Activated naive CD4-positive, alpha-beta T cell treated with anti-CD3 and anti-CD28 coated beads, Interleukin-2, amount 10 ng/mL, durations not matched to agents 7 days and 5 days (primary cell): ENCODE measurements at regions of chr3 and their contacts with region 1.

Region 1: GRCh38 chr3:32018757-32019564 is 37.4 kb downstream of the ZNF860 start:
- DNase-seq: no peak
- H3K4me3 Mint-ChIP-seq: no peak overlapping the region
- H3K27ac Mint-ChIP-seq: no peak overlapping the region
- H3K4me1 Mint-ChIP-seq: no peaks in the 10 kb centered on the region
- H3K27me3 Mint-ChIP-seq: peaks cover 10% of the 10 kb centered on the region

Region 2: DNA sequence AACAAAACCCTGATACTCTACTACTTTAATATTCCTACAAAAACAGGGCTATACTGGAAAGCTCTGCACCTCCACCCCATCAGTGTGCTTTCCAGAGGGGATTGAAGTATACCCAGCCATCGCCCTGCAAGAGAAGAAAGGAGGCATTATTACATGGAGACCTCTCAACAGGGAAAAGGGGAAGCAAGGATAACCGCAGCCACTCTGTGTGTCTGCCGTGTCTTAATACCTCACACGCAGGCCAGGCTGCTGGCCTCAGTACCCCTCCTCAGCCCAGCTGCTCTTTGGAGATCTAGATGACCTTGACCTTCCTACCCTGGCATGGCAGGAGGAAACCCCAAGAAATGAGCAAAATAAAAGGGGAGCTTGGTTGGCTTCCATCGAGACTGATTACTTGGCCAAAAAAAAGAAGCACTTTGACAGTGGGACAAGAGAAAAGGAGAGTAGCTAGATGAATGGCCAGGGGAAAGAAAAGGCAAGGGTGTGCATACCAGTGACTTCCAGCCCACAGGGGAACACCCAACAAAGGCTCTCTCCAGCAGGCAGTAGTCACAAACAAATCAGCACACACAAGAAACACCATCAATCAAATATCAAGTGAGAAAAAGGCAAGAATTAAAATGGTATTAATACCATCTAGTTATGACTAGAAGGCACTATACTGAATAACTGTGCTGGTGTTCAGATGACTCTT is 356.8 kb before region 1 on chr3:
- CTCF ChIA-PET with region 1: no interaction called
- DNase-seq: no peak
- H3K4me3 Mint-ChIP-seq: no peak overlapping the region
- H3K27ac Mint-ChIP-seq: no peak overlapping the region
- H3K4me1 Mint-ChIP-seq: no peaks in the 10 kb centered on the region
- H3K27me3 Mint-ChIP-seq: no peaks in the 10 kb centered on the region

Region 3: DNA sequence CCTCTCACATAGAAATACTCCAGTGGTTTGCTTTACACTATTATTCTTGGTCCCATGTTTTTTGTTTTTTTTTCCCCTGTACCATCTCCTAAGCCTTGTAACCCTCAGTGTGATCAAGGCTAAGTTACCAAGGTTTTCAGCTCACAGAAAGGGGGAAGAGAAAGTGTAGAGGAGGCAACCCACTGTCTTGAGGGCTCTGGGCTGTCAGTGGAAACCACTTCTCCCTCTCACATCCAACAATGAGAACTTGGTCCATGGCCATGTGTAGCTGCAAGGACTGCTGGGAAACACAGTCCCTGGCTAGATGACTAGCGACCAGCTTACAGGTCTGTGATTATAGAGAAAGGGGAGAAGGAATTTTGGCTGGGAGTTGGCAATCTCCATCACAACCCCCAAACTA is 117.7 kb after region 1 on chr3:
- CTCF ChIA-PET with region 1: interaction called, 11 read pairs
- DNase-seq: no peak
- H3K4me3 Mint-ChIP-seq: no peak overlapping the region
- H3K27ac Mint-ChIP-seq: no peak overlapping the region
- H3K4me1 Mint-ChIP-seq: peaks cover 21% of the 10 kb centered on the region
- H3K27me3 Mint-ChIP-seq: no peaks in the 10 kb centered on the region

Region 4: DNA sequence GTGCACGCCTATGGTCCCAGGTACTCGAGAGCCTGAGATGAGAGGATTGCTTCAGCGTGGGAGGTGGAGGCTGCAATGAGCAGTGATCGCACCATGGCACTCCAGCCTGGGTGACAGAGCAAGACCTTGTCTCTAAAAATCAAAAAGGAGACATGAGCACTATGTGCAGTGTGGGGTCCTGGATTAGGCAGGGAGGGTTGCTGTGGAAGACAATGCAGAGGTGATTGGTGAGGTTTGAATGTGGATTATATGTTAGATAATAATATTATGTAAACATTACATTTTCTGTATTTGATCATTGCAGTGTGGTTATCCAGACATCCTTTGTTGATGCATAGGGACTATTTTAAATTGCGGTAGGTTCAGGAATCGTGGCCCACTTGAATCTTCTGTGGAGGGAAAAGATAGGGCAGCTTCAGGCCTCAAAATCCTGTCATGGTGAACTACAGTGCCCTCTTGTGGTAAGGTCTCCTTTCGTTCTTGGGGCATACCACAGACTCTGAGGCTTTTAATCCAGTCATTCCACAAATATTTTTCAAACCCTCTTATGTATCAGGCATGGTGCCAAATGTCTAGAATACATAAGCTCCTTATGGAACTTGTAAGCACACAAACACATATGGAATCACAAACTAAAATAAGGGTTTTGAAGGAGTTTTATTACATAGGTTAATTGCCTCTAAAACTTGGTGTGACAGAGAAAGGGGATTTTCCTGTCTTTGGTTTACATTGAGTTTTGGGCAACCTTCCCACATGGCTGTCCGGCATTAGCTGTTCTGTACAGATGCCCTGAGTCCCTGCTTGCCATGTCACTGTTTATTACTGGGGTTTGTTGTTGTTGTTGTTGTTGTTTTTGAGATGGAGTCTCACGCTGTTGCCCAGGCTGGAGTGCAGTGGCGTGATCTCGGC is 125.1 kb after region 1 on chr3:
- CTCF ChIA-PET with region 1: interaction called, 44 read pairs
- DNase-seq: peak; percentile 60
- H3K4me3 Mint-ChIP-seq: no peak overlapping the region
- H3K27ac Mint-ChIP-seq: no peak overlapping the region
- H3K4me1 Mint-ChIP-seq: peaks cover 24% of the 10 kb centered on the region
- H3K27me3 Mint-ChIP-seq: no peaks in the 10 kb centered on the region

Region 5: GRCh38 chr3:32154205-32154579 is 135.2 kb after region 1 on chr3:
- CTCF ChIA-PET with region 1: interaction called, 20 read pairs
- DNase-seq: no peak
- H3K4me3 Mint-ChIP-seq: no peak overlapping the region
- H3K27ac Mint-ChIP-seq: no peak overlapping the region
- H3K4me1 Mint-ChIP-seq: no peaks in the 10 kb centered on the region
- H3K27me3 Mint-ChIP-seq: no peaks in the 10 kb centered on the region